CD14-positive monocyte (primary cell): ENCODE measurements at regions of chr16 and their contacts with region 1.

Region 1: DNA sequence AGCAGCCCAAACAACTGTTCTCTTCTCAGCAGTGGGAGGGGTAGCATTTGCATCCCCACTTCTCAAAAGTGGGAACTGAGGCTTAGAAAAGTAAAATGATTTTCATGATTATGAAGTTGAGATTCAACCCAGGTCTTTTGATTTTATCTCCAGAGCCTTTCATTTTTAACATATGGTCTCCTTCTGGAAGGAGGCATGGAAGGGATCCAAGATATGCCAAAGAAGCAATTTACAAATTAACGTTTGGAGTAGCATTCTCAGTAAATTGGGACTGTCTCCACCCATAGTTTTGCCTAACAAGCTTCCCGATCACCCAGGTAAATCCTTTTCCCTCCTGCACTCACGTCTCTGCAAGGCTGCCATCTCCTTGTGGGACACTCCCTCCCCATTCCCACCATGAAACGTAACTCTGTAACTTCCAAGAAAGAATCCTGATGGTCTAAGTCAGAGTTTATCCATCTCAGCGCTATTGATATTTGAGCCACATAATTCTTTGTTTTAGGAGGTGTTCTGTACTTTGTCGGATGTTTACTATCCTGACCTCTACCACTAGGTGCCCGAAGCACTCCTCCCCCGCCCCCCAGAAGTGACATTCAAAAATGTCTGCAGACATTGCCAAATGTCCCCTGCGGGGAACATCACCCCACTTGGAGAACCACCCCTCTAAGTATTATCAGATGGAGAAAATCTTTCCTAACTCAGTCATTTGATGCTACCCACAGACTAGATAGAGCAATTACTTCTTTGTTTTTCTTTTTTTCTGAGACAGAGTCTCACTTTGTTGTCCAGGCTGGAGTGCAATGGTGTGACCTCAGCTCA is 32.9 kb upstream of the NFAT5 start:
- DNase-seq: no peak
- H3K4me3 ChIP-seq: no peak overlapping the region
- H3K4me3 Mint-ChIP-seq: peak overlapping the region in 1 of 2 donors; percentile 28
- H3K27ac ChIP-seq: no peak overlapping the region
- H3K27ac Mint-ChIP-seq: peak overlapping the region in 1 of 7 donors; percentile 33
- H3K4me1 ChIP-seq: peaks cover 28 to 32% of the 10 kb centered on the region in 2 donors
- H3K4me1 Mint-ChIP-seq: peaks cover 29% of the 10 kb centered on the region
- H3K27me3 ChIP-seq: peaks cover 6 to 13% of the 10 kb centered on the region in 2 donors
- H3K27me3 Mint-ChIP-seq: peaks cover 21 to 22% (median 22%) of the 10 kb centered on the region in 3 donors
- CTCF ChIP-seq: no peak

Region 2: GRCh38 chr16:69513188-69513961 is 19.5 kb before region 1 on chr16:
- intact Hi-C with region 1: loop called in 1 of 2 experiments (anchors 2 kb)
- DNase-seq: no peak
- H3K4me3 ChIP-seq: peak overlapping the region in 1 of 3 experiments; percentile 12
- H3K4me3 Mint-ChIP-seq: peak overlapping the region in 1 of 2 donors; percentile 43
- H3K27ac ChIP-seq: peak overlapping the region in 1 of 2 donors; percentile 6
- H3K27ac Mint-ChIP-seq: peak overlapping the region; percentile 69 to 93 (median 88)
- H3K4me1 ChIP-seq: peaks cover 54 to 62% of the 10 kb centered on the region in 2 donors
- H3K4me1 Mint-ChIP-seq: peaks cover 49% of the 10 kb centered on the region
- H3K27me3 ChIP-seq: peaks cover 8 to 9% of the 10 kb centered on the region in 2 donors
- H3K27me3 Mint-ChIP-seq: peaks cover 16 to 24% (median 22%) of the 10 kb centered on the region in 3 donors
- CTCF ChIP-seq: no peak

Region 3: DNA sequence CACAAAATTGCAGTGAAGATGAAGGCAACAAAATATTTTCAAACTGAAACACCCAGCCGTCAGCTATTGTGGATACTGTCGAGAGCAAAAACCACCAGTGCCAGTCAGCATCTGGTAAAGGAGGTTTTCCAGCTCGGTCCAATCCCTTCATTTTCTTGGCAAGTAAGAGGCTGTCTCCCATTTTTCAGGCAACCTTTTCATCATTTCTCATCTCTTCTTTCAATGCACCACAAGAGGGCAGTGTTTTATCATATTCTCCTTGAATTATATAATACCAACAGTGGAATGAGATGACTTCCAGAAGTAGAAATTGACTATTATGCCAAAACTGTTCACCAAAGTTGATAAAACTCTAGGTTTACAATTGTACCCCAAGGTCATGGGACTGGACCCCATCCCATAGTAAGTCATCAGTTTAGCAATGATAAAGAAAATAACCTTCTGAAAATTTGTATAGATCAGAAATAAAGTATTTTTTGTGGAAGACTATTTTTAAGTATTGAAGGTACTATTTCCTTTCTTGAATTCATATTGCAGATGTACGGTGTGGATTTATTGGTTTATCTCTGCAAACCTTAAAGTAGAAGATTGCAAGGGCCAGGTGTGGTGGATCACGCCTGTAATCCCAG is 176.7 kb after region 1 on chr16:
- intact Hi-C with region 1: no loop called
- DNase-seq: peak; percentile 39 to 67 (median 54)
- H3K4me3 ChIP-seq: no peak overlapping the region
- H3K4me3 Mint-ChIP-seq: no peak overlapping the region
- H3K27ac ChIP-seq: no peak overlapping the region
- H3K27ac Mint-ChIP-seq: no peak overlapping the region
- H3K4me1 ChIP-seq: no peaks in the 10 kb centered on the region
- H3K4me1 Mint-ChIP-seq: no peaks in the 10 kb centered on the region
- H3K27me3 ChIP-seq: no peaks in the 10 kb centered on the region
- H3K27me3 Mint-ChIP-seq: no peaks in the 10 kb centered on the region
- CTCF ChIP-seq: peak; percentile 80